ENCODE measurements at regions of chr9 and their contacts with region 1.

Region 1: DNA sequence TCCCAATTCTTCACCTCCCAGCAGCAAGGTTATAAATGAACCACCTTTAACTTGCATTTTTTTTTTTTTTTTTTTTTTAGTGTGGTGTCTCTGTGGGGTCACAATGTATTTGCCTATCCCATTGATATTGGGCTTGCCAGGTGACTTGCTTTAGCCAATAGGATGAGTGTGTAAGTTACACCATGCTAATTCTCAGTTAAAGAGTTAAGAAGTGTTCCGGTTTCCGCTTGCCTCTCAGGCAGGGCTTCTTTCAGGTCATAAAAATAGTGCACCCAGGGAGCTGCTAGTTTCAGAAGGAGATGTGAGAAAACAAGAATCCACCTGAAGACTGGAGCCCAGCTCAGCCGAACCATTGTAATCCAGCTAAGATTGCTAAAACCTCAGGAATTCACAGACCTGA is 84.2 kb upstream of the PTPRD start:
- DNase-seq: no peak
- ATAC-seq: no peak
- H3K4me3 ChIP-seq: no peak overlapping the region
- H3K27ac ChIP-seq: no peak overlapping the region
- H3K4me1 ChIP-seq: no peaks in the 10 kb centered on the region
- H3K27me3 ChIP-seq: no peaks in the 10 kb centered on the region
- CTCF ChIP-seq: no peak
- POLR2A ChIP-seq: no peak
- RAD21 ChIP-seq: no peak

Region 2: DNA sequence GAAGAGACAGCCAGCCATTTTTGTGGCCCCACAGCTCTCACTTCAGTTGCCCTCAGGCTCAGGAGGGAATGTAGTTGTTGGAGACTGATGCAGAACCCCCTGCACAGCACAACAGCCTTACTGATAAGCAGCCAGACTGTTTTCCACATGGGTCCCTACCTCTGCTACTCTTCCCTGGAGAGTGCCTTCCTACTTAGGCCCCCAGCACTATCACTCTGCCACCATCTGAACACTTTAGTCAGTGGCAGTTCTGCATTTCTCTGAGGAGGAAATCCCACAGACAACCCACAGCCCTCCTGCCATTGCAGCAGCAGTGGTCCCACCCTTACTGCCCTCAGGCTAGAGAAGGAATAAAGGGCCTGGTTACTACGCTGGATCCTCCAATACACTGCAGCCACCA is 22.5 kb before region 1 on chr9:
- CTCF ChIA-PET with region 1: no interaction called
- POLR2A ChIA-PET with region 1: interaction called, 12 read pairs
- dilution Hi-C with region 1: no loop called
- in situ Hi-C with region 1: no loop called
- intact Hi-C with region 1: no loop called
- DNase-seq: no peak
- ATAC-seq: no peak
- H3K4me3 ChIP-seq: no peak overlapping the region
- H3K27ac ChIP-seq: no peak overlapping the region
- H3K4me1 ChIP-seq: no peaks in the 10 kb centered on the region
- H3K27me3 ChIP-seq: no peaks in the 10 kb centered on the region
- CTCF ChIP-seq: no peak
- POLR2A ChIP-seq: no peak
- RAD21 ChIP-seq: no peak

Measured in IMR-90 (cell line).